SK-N-SH (cell line): ENCODE measurements at regions of chr17 and their contacts with region 1.

Region 1: DNA sequence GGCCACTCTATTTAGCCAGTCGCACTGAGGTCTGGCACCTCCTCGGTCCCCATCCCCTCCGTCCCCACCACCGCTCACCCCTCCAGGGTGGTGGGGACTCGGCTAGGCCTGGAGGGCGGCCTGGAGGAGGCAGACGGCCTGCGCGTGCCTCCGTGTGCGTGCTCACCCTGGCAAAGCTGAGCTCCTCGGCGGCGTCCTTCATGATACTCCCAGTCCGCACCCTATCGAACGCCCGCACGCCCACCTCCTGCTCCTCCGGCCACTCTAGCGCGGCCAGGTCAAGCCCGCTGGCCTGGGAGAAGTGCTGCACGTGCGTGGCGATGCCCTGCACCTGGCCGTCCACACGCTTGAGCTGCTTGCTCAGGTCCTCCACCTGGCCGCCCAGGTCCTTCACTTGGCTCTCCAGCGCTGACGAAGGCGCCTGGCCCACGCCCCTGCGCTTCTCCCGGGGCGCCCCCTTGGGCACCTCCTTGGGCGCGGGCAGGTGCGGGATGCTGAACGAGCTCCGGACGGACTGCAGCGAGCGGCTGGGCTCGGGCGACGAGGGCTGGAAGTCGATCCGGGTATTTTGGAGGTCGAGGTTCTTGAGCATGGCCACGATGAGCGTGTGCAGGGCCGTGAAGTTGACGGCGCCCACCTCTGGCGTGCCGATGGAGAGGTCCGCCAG is 644 bp downstream of the QRICH2 start:
- DNase-seq: no peak
- H3K4me3 ChIP-seq: no peak overlapping the region
- H3K27ac ChIP-seq: no peak overlapping the region
- H3K4me1 ChIP-seq: no peaks in the 10 kb centered on the region
- H3K27me3 ChIP-seq: no peaks in the 10 kb centered on the region
- CTCF ChIP-seq: no peak
- EP300 ChIP-seq: no peak
- RAD21 ChIP-seq: no peak

Region 2: DNA sequence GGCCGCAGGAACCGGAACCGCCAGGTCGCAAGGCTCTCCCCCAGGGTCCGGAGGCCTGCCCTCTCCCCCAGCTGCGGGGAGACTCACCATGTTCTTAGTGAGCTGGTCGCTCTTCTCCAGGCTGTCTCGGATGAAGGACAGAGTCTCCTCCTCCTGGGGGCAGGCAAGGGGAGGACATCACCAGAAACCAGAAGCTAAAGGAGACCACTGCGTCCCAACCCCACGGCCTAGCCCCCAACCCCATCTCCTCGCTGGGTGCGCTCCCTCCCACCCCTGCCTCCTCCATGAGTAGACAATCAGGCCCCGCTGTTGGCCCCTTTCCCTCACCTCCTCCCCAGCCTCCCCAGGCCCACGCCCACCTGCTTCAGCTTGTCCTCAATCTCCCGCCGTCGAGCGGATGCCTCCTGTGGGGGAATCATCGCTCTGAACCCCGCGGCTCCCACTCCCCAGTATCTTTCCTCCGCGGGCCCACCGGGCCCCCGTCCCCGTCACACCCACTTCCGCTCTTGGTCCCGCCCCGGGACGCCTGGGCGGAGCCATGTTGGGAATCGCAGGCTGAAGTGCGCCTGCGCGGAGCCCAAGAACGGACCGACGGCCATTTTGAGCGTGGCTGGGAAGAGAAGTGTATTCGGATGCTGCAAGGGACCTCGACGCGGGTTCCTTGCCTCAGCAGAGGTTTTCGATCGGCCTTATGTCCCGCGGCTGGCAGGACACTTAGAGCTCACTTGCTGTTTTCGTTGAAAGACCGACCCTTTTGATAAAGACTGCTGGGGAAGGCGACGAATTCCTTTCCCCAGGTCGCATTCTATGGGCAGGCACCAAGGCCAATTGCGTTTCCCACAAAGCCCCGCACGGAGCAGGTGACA is 203.9 kb before region 1 on chr17 and contains the start of gene EXOC7:
- CTCF ChIA-PET with region 1: no interaction called
- POLR2A ChIA-PET with region 1: no interaction called
- DNase-seq: peak; percentile 100
- H3K4me3 ChIP-seq: peak within 1 kb of the TSS; percentile 68 to 95
- H3K27ac ChIP-seq: peak within 1 kb of the TSS; percentile 71 to 87
- H3K4me1 ChIP-seq: peaks cover 3 to 15% of the 10 kb centered on the region in 2 experiments; a peak in 2 of 4 replicates
- H3K27me3 ChIP-seq: no peaks in the 10 kb centered on the region
- CTCF ChIP-seq: peak; percentile 13; the same call in 1 of the 2 replicates
- EP300 ChIP-seq: no peak
- RAD21 ChIP-seq: no peak
- polyA plus RNA-seq, gene EXOC7: 129 and 167 TPM in 2 replicates

Region 3: GRCh38 chr17:76296186-76296585 is 11.2 kb before region 1 on chr17:
- CTCF ChIA-PET with region 1: interaction called, 10 read pairs
- POLR2A ChIA-PET with region 1: interaction called, 3 read pairs
- DNase-seq: no peak
- H3K4me3 ChIP-seq: no peak overlapping the region
- H3K27ac ChIP-seq: no peak overlapping the region
- H3K4me1 ChIP-seq: no peaks in the 10 kb centered on the region
- H3K27me3 ChIP-seq: no peaks in the 10 kb centered on the region
- CTCF ChIP-seq: no peak
- EP300 ChIP-seq: no peak
- RAD21 ChIP-seq: no peak

Region 4: DNA sequence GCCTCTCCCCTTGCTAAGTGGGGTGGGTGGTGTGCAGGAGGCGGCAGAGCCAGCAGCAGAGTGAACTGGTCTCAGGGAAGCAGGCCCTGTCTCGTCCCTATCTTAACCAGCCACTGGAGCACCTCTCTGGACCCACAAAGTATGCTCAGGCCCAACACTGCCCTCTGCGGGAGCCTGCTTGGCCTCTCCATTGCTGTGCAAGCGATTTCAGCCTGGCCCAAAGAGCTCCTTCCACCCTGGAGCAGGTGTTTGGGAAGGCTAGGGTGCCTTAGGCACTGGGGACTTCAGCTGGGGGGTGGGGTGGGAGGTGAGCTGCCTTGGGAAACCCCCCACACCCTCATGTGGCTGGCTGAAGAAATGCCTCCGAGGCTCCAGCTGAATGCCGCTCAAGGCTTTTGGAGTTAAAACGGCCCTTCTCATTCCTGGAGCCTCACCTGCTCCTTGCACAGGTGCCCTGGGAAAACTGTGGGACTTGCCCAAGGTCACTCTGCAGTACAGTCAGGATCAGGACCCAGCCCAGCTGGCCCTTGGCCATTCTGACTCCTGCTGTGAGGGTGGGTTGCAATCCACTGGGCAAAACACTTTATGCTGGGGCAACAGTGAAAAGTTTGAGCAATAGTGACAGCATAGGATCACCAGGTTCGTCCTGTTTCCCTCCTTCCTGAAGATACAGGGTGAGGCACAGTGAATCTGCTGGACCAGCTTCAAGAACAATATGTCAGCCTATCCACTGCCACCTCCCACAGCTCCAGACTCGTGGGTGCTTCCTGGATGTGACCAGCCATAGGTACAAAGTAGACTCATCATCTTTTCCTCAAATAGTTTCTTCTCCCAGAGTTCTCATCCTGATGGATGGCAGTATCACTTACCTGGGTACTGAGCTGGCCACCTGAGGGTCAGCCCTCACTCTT is 151.4 kb after region 1 on chr17:
- CTCF ChIA-PET with region 1: interaction called, 13 read pairs
- POLR2A ChIA-PET with region 1: no interaction called
- DNase-seq: peak; percentile 79
- H3K4me3 ChIP-seq: no peak overlapping the region
- H3K27ac ChIP-seq: no peak overlapping the region
- H3K4me1 ChIP-seq: no peaks in the 10 kb centered on the region; a peak in 1 of 4 replicates
- H3K27me3 ChIP-seq: no peaks in the 10 kb centered on the region
- CTCF ChIP-seq: peak; percentile 51
- EP300 ChIP-seq: no peak
- RAD21 ChIP-seq: peak; percentile 81

Region 5: DNA sequence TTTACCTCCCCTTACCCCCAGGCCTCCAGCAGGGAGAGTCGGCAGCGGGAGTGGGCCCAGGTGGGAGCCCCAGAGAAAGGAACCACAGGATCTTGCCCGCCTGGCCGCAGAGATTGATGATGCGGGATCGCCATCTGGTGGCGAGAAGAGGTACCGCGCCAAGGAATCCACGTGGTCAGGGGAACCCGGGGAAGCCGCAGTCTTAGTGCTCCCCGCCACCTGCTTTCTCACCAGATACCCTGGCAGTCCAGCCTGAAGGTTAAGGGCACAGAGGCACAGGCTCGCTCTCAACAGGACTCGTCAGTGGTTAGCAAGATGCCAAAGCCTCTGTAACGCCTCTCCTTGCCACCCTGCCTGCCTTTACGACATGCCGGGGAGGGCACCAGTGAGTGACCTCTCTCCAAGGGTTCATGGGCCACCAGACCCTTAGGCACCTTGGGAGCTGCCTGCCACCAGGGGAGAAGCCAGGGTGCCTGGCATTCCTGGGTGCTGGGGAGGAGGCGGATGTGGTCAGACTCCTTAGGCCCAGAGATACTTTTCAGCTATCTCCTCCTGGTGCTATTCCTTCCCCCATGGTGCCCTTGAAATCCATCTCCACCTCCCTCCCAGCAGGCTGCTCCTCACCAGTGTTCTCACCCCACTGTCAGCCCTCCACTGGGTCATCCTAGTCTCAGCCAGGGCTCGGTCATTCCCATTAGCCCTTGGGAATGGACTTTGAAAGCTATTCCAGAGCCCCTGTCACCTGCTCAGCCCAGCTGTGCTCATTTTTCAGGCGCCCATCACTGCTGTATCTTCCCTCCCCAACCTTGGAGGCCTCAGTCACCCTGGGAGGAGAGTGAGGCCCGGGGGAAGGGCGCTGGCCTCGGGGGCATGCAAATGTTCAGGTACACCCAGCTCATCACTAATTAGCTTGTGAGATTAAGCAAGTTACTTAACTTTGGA is 199.2 kb after region 1 on chr17:
- CTCF ChIA-PET with region 1: interaction called, 12 read pairs
- POLR2A ChIA-PET with region 1: no interaction called
- DNase-seq: peak; percentile 95
- H3K4me3 ChIP-seq: no peak overlapping the region; a peak in 1 of 4 replicates
- H3K27ac ChIP-seq: no peak overlapping the region
- H3K4me1 ChIP-seq: peaks cover 0 to 14% of the 10 kb centered on the region in 2 experiments; a peak in 1 of 4 replicates
- H3K27me3 ChIP-seq: peaks cover 9% of the 10 kb centered on the region
- CTCF ChIP-seq: peak; percentile 96
- EP300 ChIP-seq: no peak
- RAD21 ChIP-seq: peak; percentile 99